Aorta (tissue), 5 donors: ENCODE measurements at regions of chr6 and their contacts with region 1.

Region 1: DNA sequence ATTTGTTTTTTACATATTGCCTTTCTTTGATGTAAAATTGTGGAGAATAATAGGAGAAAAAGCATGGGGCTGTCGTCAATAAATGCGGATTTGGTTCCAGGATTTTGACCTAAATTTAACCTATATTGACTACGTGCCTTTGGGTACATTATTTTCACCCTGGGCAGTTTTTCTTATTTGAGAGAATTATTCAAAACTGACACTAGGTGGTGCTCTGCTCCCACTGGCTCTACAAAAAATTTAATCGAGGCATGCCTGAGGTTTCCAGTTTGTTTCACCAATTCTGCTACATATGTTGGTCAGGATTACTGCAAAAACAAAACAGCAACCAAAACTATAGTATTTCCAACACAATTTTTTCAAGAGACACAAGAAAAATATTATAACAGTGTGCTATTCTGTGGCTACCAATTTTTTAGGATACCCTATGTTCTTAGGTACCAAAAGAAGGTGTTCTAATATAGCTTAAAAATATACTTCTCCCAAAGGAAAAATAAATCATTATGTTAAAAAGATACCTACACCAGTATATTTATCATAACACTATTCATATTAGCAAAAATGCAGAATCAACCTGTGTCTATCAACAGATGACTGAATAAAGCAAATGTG is 48.6 kb upstream of the FABP7 start:
- DNase-seq: no peak
- ATAC-seq: peak; percentile 64
- H3K4me3 ChIP-seq: no peak overlapping the region
- H3K27ac ChIP-seq: no peak overlapping the region
- H3K4me1 ChIP-seq: no peaks in the 10 kb centered on the region
- H3K27me3 ChIP-seq: no peaks in the 10 kb centered on the region

Region 2: GRCh38 chr6:122200440-122200839 is 530.4 kb before region 1 on chr6:
- intact Hi-C with region 1: no loop called
- DNase-seq: no peak
- ATAC-seq: no peak
- H3K4me3 ChIP-seq: no peak overlapping the region
- H3K27ac ChIP-seq: no peak overlapping the region
- H3K4me1 ChIP-seq: no peaks in the 10 kb centered on the region
- H3K27me3 ChIP-seq: no peaks in the 10 kb centered on the region

Region 3: DNA sequence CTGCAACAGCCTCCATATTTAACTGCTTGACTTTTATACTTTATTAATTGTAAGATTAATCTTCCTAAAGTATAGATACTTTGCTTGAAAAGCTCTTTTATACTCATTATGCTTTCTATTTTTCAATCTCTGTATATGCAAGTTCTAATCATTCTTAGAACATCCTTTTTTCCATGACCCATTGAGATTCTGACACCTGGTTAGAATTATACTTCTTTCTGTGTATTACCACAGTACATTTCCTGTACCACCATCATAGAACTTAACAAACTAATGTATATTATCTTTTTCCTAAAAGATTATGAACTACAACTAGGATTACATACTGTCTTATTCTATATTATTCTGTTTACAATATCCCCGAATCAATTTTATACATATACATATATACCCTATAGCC is 272.8 kb before region 1 on chr6:
- intact Hi-C with region 1: no loop called
- DNase-seq: no peak
- ATAC-seq: no peak
- H3K4me3 ChIP-seq: no peak overlapping the region
- H3K27ac ChIP-seq: no peak overlapping the region
- H3K4me1 ChIP-seq: peaks cover 2 to 10% of the 10 kb centered on the region in 2 donors
- H3K27me3 ChIP-seq: no peaks in the 10 kb centered on the region

Region 4: GRCh38 chr6:122839477-122839876 is 108.6 kb after region 1 on chr6:
- intact Hi-C with region 1: loop called (anchors 1 to 5 kb)
- DNase-seq: no peak
- ATAC-seq: peak; percentile 66
- H3K4me3 ChIP-seq: no peak overlapping the region
- H3K27ac ChIP-seq: no peak overlapping the region
- H3K4me1 ChIP-seq: no peaks in the 10 kb centered on the region
- H3K27me3 ChIP-seq: no peaks in the 10 kb centered on the region

Region 5: DNA sequence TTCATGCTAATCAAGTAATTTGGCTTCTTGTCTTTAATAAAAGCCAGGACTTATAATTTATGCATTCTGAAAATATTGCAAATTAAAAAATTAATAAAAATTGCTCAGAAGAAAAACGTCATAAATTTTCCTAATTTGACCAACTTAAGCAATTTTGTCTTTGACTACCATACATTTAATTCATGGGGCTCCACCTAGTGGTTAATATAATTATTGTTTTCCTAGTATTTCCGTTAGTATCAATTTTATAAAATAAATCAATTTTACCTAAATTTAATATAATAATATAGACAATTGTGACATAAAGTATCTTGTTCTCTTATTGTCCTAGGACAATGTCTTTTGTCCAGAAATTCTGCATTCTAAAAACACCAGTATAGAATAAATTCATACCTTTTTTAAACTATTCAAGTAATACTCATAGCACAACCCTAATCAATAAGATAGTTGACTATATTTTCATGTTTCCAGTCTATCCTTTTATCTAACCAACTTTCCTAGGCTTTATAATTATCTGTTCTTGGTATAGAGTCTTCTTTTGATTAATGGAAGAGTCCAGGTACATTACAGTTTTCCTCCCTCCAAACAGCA is 585.9 kb after region 1 on chr6:
- intact Hi-C with region 1: loop called (anchors 5 kb)
- DNase-seq: no peak
- ATAC-seq: no peak
- H3K4me3 ChIP-seq: no peak overlapping the region
- H3K27ac ChIP-seq: no peak overlapping the region
- H3K4me1 ChIP-seq: no peaks in the 10 kb centered on the region
- H3K27me3 ChIP-seq: no peaks in the 10 kb centered on the region